Naive thymus-derived CD4-positive, alpha-beta T cell (primary cell): ENCODE measurements at regions of chr6 and their contacts with region 1.

Region 1: GRCh38 chr6:18439581-18439980 is 52.4 kb downstream of the RNF144B start:
- DNase-seq: peak in 1 of 9 donors; percentile 4
- ATAC-seq: no peak
- H3K4me3 ChIP-seq: no peak overlapping the region
- H3K4me3 Mint-ChIP-seq: no peak overlapping the region
- H3K27ac ChIP-seq: no peak overlapping the region
- H3K27ac Mint-ChIP-seq: peak overlapping the region in 2 of 9 donors; percentile 3
- H3K4me1 ChIP-seq: no peaks in the 10 kb centered on the region
- H3K4me1 Mint-ChIP-seq: peaks cover 0 to 16% (median 13%) of the 10 kb centered on the region in 7 donors
- H3K27me3 ChIP-seq: no peaks in the 10 kb centered on the region
- H3K27me3 Mint-ChIP-seq: no peaks in the 10 kb centered on the region

Region 2: GRCh38 chr6:18350271-18350670 is 89.3 kb before region 1 on chr6:
- CTCF ChIA-PET with region 1: no interaction called
- POLR2A ChIA-PET with region 1: no interaction called
- intact Hi-C with region 1: no loop called
- DNase-seq: no peak
- ATAC-seq: no peak
- H3K4me3 ChIP-seq: no peak overlapping the region
- H3K4me3 Mint-ChIP-seq: no peak overlapping the region
- H3K27ac ChIP-seq: no peak overlapping the region
- H3K27ac Mint-ChIP-seq: no peak overlapping the region
- H3K4me1 ChIP-seq: no peaks in the 10 kb centered on the region
- H3K4me1 Mint-ChIP-seq: peaks cover 0 to 5% (median 0%) of the 10 kb centered on the region in 7 donors
- H3K27me3 ChIP-seq: no peaks in the 10 kb centered on the region
- H3K27me3 Mint-ChIP-seq: peaks cover 7 to 25% (median 10%) of the 10 kb centered on the region in 5 donors

Region 3: DNA sequence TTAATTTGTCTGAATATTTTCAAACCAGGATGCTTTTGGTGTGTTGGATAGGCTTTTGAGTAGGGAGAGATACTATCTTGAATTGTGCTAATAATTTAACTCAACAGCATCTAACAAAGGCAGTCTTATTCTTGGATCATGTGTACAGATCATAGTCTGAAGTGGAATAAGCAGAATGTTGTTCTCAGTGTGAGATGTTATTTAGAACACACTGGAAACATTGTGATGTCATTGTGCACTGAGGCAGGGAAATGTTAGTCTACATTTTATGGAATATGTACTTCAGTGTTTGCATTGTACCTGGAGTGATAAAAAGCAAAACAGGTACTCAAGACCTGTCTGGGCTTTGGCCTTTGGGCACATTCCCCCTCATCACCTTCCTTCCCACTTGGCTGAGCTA is 17.4 kb before region 1 on chr6:
- CTCF ChIA-PET with region 1: no interaction called
- POLR2A ChIA-PET with region 1: no interaction called
- intact Hi-C with region 1: loop called in 1 of 2 experiments (anchors 1 kb)
- DNase-seq: no peak
- ATAC-seq: no peak
- H3K4me3 ChIP-seq: no peak overlapping the region
- H3K4me3 Mint-ChIP-seq: no peak overlapping the region
- H3K27ac ChIP-seq: no peak overlapping the region
- H3K27ac Mint-ChIP-seq: no peak overlapping the region
- H3K4me1 ChIP-seq: no peaks in the 10 kb centered on the region
- H3K4me1 Mint-ChIP-seq: peaks cover 0 to 16% (median 10%) of the 10 kb centered on the region in 7 donors
- H3K27me3 ChIP-seq: no peaks in the 10 kb centered on the region
- H3K27me3 Mint-ChIP-seq: no peaks in the 10 kb centered on the region

Region 4: GRCh38 chr6:18707714-18708439 is 268.3 kb after region 1 on chr6:
- CTCF ChIA-PET with region 1: no interaction called
- POLR2A ChIA-PET with region 1: no interaction called
- intact Hi-C with region 1: no loop called
- DNase-seq: no peak
- ATAC-seq: no peak
- H3K4me3 ChIP-seq: no peak overlapping the region
- H3K4me3 Mint-ChIP-seq: no peak overlapping the region
- H3K27ac ChIP-seq: no peak overlapping the region
- H3K27ac Mint-ChIP-seq: no peak overlapping the region
- H3K4me1 ChIP-seq: no peaks in the 10 kb centered on the region
- H3K4me1 Mint-ChIP-seq: peaks cover 0 to 2% (median 0%) of the 10 kb centered on the region in 7 donors
- H3K27me3 ChIP-seq: no peaks in the 10 kb centered on the region
- H3K27me3 Mint-ChIP-seq: peaks cover 0 to 4% (median 0%) of the 10 kb centered on the region in 5 donors

Region 5: GRCh38 chr6:19999319-20000191 is 1560.0 kb after region 1 on chr6:
- CTCF ChIA-PET with region 1: no interaction called
- POLR2A ChIA-PET with region 1: no interaction called
- intact Hi-C with region 1: no loop called
- DNase-seq: no peak
- ATAC-seq: peak; percentile 38
- H3K4me3 ChIP-seq: no peak overlapping the region
- H3K4me3 Mint-ChIP-seq: no peak overlapping the region
- H3K27ac ChIP-seq: no peak overlapping the region
- H3K27ac Mint-ChIP-seq: peak overlapping the region in 1 of 9 donors; percentile 0
- H3K4me1 ChIP-seq: no peaks in the 10 kb centered on the region
- H3K4me1 Mint-ChIP-seq: peaks cover 0 to 4% (median 0%) of the 10 kb centered on the region in 7 donors
- H3K27me3 ChIP-seq: no peaks in the 10 kb centered on the region
- H3K27me3 Mint-ChIP-seq: peaks cover 2 to 27% (median 7%) of the 10 kb centered on the region in 5 donors